PC-3 (cell line): ENCODE measurements at regions of chr4 and their contacts with region 1.

Region 1: GRCh38 chr4:23060776-23061175 is 368.0 kb downstream of the GBA3 start:
- DNase-seq: peak; percentile 76
- ATAC-seq: peak; percentile 93
- H3K4me3 ChIP-seq: no peak overlapping the region
- H3K27ac ChIP-seq: peak overlapping the region; percentile 46
- H3K4me1 ChIP-seq: peaks cover 15% of the 10 kb centered on the region
- H3K27me3 ChIP-seq: no peaks in the 10 kb centered on the region
- CTCF ChIP-seq: no peak

Region 2: DNA sequence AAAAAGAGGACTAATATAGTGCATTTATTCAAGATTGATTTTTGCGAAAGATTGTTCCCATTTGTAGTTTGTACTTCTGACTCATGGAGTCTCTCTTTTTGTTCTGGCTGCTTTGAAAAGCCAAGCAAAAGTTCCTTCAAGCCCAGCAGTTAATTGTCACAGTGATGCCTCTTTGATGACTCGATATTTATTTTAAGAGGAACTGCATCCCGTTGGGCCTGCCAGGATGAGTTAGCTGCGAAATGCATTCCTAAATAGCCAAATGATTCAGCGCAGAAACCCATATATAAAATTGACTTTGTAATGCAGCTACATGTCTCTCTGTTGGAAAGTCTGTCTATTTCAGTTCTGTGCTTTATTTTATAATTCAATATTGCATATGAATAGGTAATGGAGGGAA is 72.9 kb before region 1 on chr4:
- CTCF ChIA-PET with region 1: no interaction called
- POLR2A ChIA-PET with region 1: no interaction called
- intact Hi-C with region 1: loop called (anchors 10 kb)
- DNase-seq: peak; percentile 86
- ATAC-seq: peak; percentile 85
- H3K4me3 ChIP-seq: no peak overlapping the region
- H3K27ac ChIP-seq: peak overlapping the region; percentile 55
- H3K4me1 ChIP-seq: peaks cover 36% of the 10 kb centered on the region
- H3K27me3 ChIP-seq: no peaks in the 10 kb centered on the region
- CTCF ChIP-seq: no peak